Activated B cell treated with CpG ODN at 0.5 μM for 24 hours (primary cell): ENCODE measurements at regions of chr14 and their contacts with region 1.

Region 1: GRCh38 chr14:58501214-58501816 is 73.8 kb downstream of the KIAA0586 start:
- DNase-seq: no peak
- ATAC-seq: peak; percentile 71
- H3K4me3 Mint-ChIP-seq: no peak overlapping the region
- H3K27ac Mint-ChIP-seq: no peak overlapping the region
- H3K4me1 Mint-ChIP-seq: no peaks in the 10 kb centered on the region
- H3K27me3 Mint-ChIP-seq: no peaks in the 10 kb centered on the region
- CTCF ChIP-seq: no peak

Region 2: GRCh38 chr14:58408681-58409215 is 92.6 kb before region 1 on chr14:
- CTCF ChIA-PET with region 1: no interaction called
- POLR2A ChIA-PET with region 1: no interaction called
- intact Hi-C with region 1: no loop called
- DNase-seq: no peak
- ATAC-seq: no peak
- H3K4me3 Mint-ChIP-seq: no peak overlapping the region
- H3K27ac Mint-ChIP-seq: no peak overlapping the region
- H3K4me1 Mint-ChIP-seq: no peaks in the 10 kb centered on the region
- H3K27me3 Mint-ChIP-seq: no peaks in the 10 kb centered on the region
- CTCF ChIP-seq: no peak

Region 3: DNA sequence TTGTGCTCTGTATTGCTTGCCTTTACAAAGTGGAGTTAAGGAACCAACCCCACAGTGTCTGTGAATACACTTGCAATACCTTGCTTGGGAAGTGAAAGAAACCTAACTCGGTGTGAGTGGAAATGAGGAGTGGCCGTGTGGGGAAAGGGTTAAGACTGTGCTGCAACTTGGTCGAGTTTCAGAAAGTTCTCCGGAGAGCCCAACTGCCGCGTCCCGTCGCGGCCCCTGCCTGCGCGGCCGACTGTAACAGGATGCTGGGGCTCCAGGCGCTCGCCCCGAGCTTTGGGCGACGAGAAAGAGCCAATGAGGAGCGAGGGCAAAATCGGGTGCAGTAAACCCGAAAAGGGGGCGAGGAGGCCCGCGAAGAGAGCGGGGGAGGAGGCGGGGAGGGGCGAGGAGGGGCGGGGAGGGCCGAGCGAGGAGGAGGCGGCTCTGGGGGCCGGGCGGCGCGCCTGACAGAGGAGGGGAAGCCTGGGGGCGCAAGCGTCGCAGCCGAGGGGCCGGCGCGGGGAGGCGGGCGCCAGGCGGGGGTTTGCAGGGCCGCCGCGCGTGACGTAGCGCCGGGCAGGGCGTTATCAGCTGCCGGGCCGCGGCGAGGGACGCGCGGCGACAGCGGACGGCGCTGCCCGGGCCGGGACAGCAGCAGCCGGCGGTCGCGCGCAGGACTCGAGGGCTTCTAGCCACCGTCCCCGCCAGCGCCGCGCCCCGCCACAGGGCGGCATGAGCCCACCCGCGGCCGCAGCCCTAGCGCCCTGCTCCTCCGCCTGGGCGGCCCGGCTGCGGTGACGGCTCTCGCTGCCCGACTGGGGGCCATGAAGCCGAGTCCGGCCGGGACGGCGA is 136.3 kb after region 1 on chr14 and contains the start of gene DACT1:
- CTCF ChIA-PET with region 1: interaction called, 4 read pairs
- POLR2A ChIA-PET with region 1: no interaction called
- intact Hi-C with region 1: loop called (anchors 5 kb)
- DNase-seq: peak; percentile 52
- ATAC-seq: peak; percentile 80
- H3K4me3 Mint-ChIP-seq: peak within 1 kb of the TSS; percentile 94
- H3K27ac Mint-ChIP-seq: peak within 1 kb of the TSS; percentile 90
- H3K4me1 Mint-ChIP-seq: peaks cover 46% of the 10 kb centered on the region
- H3K27me3 Mint-ChIP-seq: peaks cover 17% of the 10 kb centered on the region
- CTCF ChIP-seq: no peak
- total RNA-seq, gene DACT1: 3.0 and 3.5 TPM in 2 replicates

Region 4: GRCh38 chr14:59020382-59020781 is 519.1 kb after region 1 on chr14:
- CTCF ChIA-PET with region 1: interaction called, 6 read pairs
- POLR2A ChIA-PET with region 1: no interaction called
- intact Hi-C with region 1: loop called (anchors 1 kb)
- DNase-seq: no peak
- ATAC-seq: no peak
- H3K4me3 Mint-ChIP-seq: no peak overlapping the region
- H3K27ac Mint-ChIP-seq: no peak overlapping the region
- H3K4me1 Mint-ChIP-seq: no peaks in the 10 kb centered on the region
- H3K27me3 Mint-ChIP-seq: no peaks in the 10 kb centered on the region
- CTCF ChIP-seq: no peak

Region 5: GRCh38 chr14:59028476-59029202 is 527.3 kb after region 1 on chr14:
- CTCF ChIA-PET with region 1: interaction called, 5 read pairs
- POLR2A ChIA-PET with region 1: no interaction called
- intact Hi-C with region 1: loop called (anchors 1 kb)
- DNase-seq: no peak
- ATAC-seq: no peak
- H3K4me3 Mint-ChIP-seq: no peak overlapping the region
- H3K27ac Mint-ChIP-seq: no peak overlapping the region
- H3K4me1 Mint-ChIP-seq: peaks cover 6% of the 10 kb centered on the region
- H3K27me3 Mint-ChIP-seq: peaks cover 11% of the 10 kb centered on the region
- CTCF ChIP-seq: no peak

Region 6: GRCh38 chr14:59055439-59056045 is 554.2 kb after region 1 on chr14:
- CTCF ChIA-PET with region 1: interaction called, 26 read pairs
- POLR2A ChIA-PET with region 1: no interaction called
- intact Hi-C with region 1: loop called (anchors 1 kb)
- DNase-seq: no peak
- ATAC-seq: no peak
- H3K4me3 Mint-ChIP-seq: no peak overlapping the region
- H3K27ac Mint-ChIP-seq: no peak overlapping the region
- H3K4me1 Mint-ChIP-seq: no peaks in the 10 kb centered on the region
- H3K27me3 Mint-ChIP-seq: peaks cover 5% of the 10 kb centered on the region
- CTCF ChIP-seq: no peak

Region 7: DNA sequence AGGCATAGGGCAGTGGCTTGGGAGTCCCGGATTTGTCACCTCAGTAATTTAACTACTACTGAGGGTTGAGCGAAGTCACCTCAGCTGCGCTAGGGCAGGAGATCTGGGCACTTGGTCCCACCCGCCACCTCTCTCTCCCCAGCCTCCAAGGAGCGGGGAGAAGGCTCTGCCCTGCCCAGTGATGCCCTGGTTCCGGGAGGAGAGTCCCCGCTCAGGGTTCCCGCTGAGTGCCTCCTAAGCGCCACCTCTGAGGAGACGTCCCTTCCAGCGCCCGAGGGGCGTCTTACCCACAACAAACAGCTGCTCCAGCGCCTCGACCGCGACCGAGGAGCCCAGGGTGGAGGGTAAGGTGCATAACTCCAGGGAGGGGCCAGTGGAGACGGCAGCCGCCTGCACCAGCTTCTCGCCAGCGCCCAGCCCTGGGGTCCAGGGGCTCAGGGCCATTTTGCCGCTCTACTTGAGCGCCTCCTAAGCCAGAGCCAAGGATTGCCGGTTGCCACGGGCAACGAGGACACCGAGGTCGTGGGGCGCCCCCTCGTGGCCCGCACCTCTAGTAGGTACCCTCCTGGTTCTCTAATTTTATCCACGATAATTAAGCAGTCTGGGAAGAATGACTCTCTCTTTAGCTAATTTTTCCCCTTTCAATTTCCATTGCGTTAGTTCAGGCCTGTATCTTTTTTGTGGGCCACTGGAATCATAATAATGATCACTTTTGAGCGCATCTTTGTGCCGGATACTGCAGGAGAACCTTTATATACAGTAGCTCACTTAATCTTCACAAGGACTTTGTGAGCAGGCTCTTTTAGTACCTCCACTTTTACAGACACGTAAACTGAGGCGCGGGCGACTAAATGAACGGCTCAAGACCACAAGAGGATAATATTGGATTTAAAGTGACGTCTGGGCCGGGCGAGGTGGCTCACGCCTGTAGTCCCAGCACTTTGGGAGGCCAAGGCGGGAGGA is 1075.3 kb after region 1 on chr14 and contains the start of gene CCDC175:
- CTCF ChIA-PET with region 1: no interaction called
- POLR2A ChIA-PET with region 1: no interaction called
- intact Hi-C with region 1: loop called (anchors 1 kb)
- DNase-seq: peak; percentile 68
- ATAC-seq: peak; percentile 94
- H3K4me3 Mint-ChIP-seq: peak within 1 kb of the TSS; percentile 70
- H3K27ac Mint-ChIP-seq: no peak within 1 kb of the TSS
- H3K4me1 Mint-ChIP-seq: peaks cover 8% of the 10 kb centered on the region
- H3K27me3 Mint-ChIP-seq: peaks cover 11% of the 10 kb centered on the region
- CTCF ChIP-seq: no peak
- total RNA-seq, gene CCDC175: not detected in 2 replicates